Activated CD4-positive, alpha-beta memory T cell treated with anti-CD3 and anti-CD28 coated beads, Interleukin-2, amount 10 ng/mL, durations not matched to agents 7 days and 5 days (primary cell): ENCODE measurements at regions of chr5 and their contacts with region 1.

Region 1: GRCh38 chr5:76733049-76733417 is 17.1 kb downstream of the F2R start:
- DNase-seq: peak; percentile 86
- H3K4me3 Mint-ChIP-seq: peak overlapping the region; percentile 70
- H3K27ac Mint-ChIP-seq: peak overlapping the region; percentile 98
- H3K4me1 Mint-ChIP-seq: peaks cover 62% of the 10 kb centered on the region
- H3K27me3 Mint-ChIP-seq: no peaks in the 10 kb centered on the region

Region 2: DNA sequence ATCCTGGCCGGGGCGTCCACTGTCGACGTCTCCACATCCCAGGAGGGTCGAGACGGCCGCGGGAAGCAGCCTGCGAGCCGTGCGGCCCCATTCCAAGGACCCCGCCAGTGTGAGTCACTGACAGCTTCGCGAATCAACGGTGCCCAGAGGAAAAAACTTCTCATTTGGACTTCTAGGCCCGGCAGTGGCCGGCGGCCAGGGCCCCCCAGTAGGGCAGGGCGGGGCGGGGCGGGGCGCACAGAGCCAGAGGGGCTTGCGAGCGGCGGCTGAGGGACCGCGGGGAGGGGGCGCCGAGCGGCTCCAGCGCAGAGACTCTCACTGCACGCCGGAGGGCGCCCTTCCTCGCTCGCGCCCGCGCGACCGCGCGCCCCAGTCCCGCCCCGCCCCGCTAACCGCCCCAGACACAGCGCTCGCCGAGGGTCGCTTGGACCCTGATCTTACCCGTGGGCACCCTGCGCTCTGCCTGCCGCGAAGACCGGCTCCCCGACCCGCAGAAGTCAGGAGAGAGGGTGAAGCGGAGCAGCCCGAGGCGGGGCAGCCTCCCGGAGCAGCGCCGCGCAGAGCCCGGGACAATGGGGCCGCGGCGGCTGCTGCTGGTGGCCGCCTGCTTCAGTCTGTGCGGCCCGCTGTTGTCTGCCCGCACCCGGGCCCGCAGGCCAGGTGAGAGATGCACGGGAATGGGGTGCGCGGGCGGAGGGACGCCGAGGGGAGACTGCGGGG is 17.1 kb before region 1 on chr5 and contains the start of gene F2R:
- CTCF ChIA-PET with region 1: interaction called, 40 read pairs
- POLR2A ChIA-PET with region 1: interaction called, 67 read pairs
- DNase-seq: peak; percentile 72
- H3K4me3 Mint-ChIP-seq: peak within 1 kb of the TSS; percentile 83
- H3K27ac Mint-ChIP-seq: peak within 1 kb of the TSS; percentile 76
- H3K4me1 Mint-ChIP-seq: peaks cover 61% of the 10 kb centered on the region
- H3K27me3 Mint-ChIP-seq: no peaks in the 10 kb centered on the region
- total RNA-seq, gene F2R: 35.0 to 36.6 TPM

Region 3: DNA sequence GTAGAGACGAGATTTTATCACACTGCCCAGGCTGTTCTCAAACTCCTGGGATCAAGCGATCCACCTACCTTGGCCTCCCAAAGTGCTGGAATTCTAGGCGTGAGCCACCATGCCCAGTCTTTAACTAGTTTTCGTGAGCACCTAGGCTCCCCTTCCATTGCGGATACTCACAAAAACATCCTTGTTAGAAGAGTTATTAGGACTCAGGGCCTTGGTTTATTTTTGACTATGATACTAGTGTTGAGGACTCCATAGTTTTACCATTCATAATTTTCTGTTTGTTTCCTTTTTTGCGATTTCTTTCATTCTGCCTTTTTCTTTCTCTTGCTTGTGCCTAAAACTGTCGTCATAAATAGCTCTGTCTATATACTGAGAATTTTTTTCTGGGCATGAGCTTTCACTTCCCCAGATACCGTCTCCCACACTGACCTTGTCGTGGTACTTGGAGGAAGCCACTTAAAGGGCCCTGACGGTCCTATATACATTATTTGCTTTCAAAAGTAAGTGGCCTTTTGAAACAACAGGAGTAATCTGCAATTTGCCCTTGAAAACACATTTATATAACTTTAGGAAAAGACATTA is 12.0 kb before region 1 on chr5:
- CTCF ChIA-PET with region 1: interaction called, 40 read pairs
- POLR2A ChIA-PET with region 1: interaction called, 67 read pairs
- DNase-seq: no peak
- H3K4me3 Mint-ChIP-seq: no peak overlapping the region
- H3K27ac Mint-ChIP-seq: no peak overlapping the region
- H3K4me1 Mint-ChIP-seq: peaks cover 51% of the 10 kb centered on the region
- H3K27me3 Mint-ChIP-seq: no peaks in the 10 kb centered on the region

Region 4: DNA sequence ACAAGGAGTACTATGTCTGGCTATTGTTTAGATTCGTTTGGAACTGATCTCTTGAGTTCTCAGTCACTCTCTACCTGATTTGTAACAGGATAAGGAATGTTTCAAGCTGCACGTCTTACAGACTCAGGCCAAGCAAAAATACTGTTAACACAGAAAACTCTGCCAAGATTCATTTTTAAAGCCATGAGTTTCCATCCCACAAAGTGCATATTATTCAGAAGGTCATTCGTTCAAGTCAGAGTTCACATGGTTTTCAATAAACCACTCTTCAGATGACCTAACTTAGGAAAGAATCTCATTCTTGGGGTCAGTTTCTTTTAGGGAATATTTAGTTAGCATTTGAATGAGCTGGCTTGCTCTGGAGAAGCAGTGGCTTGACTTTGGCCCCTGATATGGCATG is 32.2 kb after region 1 on chr5:
- CTCF ChIA-PET with region 1: no interaction called
- POLR2A ChIA-PET with region 1: interaction called, 12 read pairs
- DNase-seq: no peak
- H3K4me3 Mint-ChIP-seq: no peak overlapping the region
- H3K27ac Mint-ChIP-seq: no peak overlapping the region
- H3K4me1 Mint-ChIP-seq: peaks cover 19% of the 10 kb centered on the region
- H3K27me3 Mint-ChIP-seq: no peaks in the 10 kb centered on the region

Region 5: DNA sequence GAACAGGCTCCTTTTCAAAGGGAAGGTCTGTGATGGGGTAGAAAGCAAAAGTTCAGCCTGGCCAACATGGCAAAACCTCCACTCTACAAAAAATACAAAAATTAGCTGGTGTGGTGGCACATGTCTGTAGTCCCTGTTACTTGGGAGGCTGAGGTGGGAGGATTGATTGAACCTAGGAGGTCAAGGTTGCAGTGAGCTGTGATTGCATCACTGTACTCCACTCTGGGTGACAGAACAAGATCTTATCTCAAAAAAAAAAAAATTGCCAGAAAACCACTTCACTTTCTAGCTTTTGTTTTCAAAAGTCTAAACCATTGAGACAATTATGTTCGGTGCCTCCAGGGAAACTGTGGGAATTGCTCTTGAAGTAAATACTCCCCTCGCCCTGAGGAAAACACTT is 160.3 kb after region 1 on chr5:
- CTCF ChIA-PET with region 1: no interaction called
- POLR2A ChIA-PET with region 1: no interaction called
- DNase-seq: no peak
- H3K4me3 Mint-ChIP-seq: no peak overlapping the region
- H3K27ac Mint-ChIP-seq: no peak overlapping the region
- H3K4me1 Mint-ChIP-seq: no peaks in the 10 kb centered on the region
- H3K27me3 Mint-ChIP-seq: peaks cover 18% of the 10 kb centered on the region